ENCODE measurements at regions of chr1 and their contacts with region 1.

Region 1: DNA sequence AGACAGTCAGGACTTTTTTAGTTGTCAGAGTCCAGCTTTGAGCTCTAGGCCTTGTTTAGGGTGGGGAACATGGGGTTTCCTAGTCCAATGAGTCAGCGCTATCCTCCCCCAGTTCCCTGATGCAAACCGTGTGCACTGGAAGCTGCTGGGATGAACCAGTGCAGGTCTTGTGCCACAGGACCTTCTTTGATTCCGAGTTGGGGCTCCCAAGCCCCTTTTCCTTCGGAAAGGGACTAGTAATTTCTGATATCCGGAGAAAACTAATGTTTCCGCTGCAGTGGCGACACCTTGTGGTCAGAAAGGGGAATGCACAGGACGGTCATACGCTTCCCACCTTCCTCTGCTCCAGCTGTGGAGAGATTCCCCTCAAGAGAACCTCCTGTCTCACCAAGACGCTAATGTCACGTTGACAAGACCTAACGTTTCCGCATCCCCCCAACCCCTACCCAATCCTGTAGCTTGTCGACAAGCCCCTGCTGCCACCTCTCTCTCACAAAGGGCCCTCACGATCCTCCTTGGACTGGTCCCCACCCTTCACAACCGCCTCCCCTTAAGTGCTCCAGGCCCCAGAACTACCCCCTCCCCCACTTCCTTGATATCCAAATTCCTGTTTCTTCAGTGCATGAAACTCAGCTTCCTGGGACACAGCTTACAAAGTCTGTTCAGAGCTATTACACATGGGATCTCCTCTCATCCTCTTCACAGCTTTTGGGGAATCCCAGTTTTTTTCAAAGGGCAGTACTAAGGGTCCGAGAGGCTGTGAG is 30.9 kb downstream of the GPA33 start:
- DNase-seq: peak; percentile 90
- ATAC-seq: peak; percentile 52
- H3K4me3 ChIP-seq: peak overlapping the region; percentile 28; the same call in 1 of the 2 replicates
- H3K27ac ChIP-seq: no peak overlapping the region
- H3K4me1 ChIP-seq: peaks cover 14% of the 10 kb centered on the region
- H3K27me3 ChIP-seq: no peaks in the 10 kb centered on the region
- CTCF ChIP-seq: peak; percentile 97

Region 2: GRCh38 chr1:166975361-166976129 is 83.7 kb before region 1 on chr1 and contains the start of gene ILDR2:
- CTCF ChIA-PET with region 1: no interaction called
- POLR2A ChIA-PET with region 1: no interaction called
- intact Hi-C with region 1: loop called (anchors 10 kb)
- DNase-seq: peak; percentile 10
- ATAC-seq: peak; percentile 70
- H3K4me3 ChIP-seq: peak within 1 kb of the TSS; percentile 66
- H3K27ac ChIP-seq: no peak within 1 kb of the TSS
- H3K4me1 ChIP-seq: no peaks in the 10 kb centered on the region
- H3K27me3 ChIP-seq: peaks cover 87% of the 10 kb centered on the region
- CTCF ChIP-seq: no peak
- total RNA-seq, gene ILDR2: under 0.01 TPM in 1 of 2 replicates, not detected in the other

Region 3: DNA sequence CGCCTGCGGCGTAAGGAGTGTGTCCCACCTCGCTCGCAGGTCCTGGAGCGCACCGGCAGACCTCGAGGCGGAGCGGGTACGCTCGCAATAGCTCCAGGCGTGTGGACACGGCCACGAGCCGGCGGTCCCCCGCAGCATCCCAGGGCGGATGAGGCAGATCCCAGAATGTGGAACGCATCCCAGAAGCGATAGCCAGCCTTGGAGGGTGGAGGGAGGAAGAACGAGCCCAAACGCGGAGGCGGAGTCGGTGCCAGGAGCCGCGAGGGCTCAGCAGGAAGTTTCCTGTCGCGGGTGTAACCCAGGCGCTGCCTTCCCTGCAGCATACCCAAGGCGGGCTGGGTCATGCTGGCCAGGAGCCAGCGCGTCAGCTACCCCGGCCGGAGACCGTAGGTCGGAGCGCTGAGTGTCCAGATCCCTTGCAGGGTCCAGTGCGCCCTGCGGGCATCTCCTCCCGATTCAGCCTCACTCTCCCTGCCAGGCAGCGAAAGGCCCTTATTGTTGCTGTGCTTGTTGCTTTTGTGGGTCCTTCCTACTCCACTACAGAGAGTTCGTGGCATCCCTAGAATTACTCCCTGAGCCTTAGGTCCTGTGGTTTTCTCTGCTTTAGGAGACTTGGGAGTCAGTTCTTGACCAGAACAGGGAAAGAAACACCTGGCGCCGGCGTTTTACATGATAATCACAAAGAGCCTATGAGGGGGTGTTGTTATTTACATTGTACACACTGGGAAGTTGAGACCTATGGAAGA is 62.3 kb after region 1 on chr1:
- CTCF ChIA-PET with region 1: no interaction called
- POLR2A ChIA-PET with region 1: no interaction called
- intact Hi-C with region 1: no loop called
- DNase-seq: peak; percentile 66
- ATAC-seq: peak; percentile 63
- H3K4me3 ChIP-seq: peak overlapping the region; percentile 68
- H3K27ac ChIP-seq: no peak overlapping the region
- H3K4me1 ChIP-seq: no peaks in the 10 kb centered on the region
- H3K27me3 ChIP-seq: no peaks in the 10 kb centered on the region
- CTCF ChIP-seq: no peak

Measured in PC-3 (cell line).